Naive thymus-derived CD4-positive, alpha-beta T cell (primary cell): ENCODE measurements at regions of chr3 and their contacts with region 1.

Region 1: GRCh38 chr3:51498876-51499738 is 708 bp downstream of the DCAF1 start:
- DNase-seq: peak; percentile 52 to 90 (median 73)
- ATAC-seq: peak; percentile 58
- H3K4me3 ChIP-seq: peak overlapping the region; percentile 84
- H3K4me3 Mint-ChIP-seq: peak overlapping the region; percentile 87 to 100 (median 98)
- H3K27ac ChIP-seq: peak overlapping the region; percentile 90
- H3K27ac Mint-ChIP-seq: peak overlapping the region; percentile 90 to 99 (median 94)
- H3K4me1 ChIP-seq: peaks cover 10 to 14% of the 10 kb centered on the region in 2 donors
- H3K4me1 Mint-ChIP-seq: peaks cover 4 to 38% (median 35%) of the 10 kb centered on the region in 7 donors
- H3K27me3 ChIP-seq: no peaks in the 10 kb centered on the region
- H3K27me3 Mint-ChIP-seq: peaks cover 0 to 2% (median 0%) of the 10 kb centered on the region in 5 donors

Region 2: GRCh38 chr3:50850639-50851511 is 648.2 kb before region 1 on chr3:
- CTCF ChIA-PET with region 1: no interaction called
- POLR2A ChIA-PET with region 1: no interaction called
- intact Hi-C with region 1: no loop called
- DNase-seq: no peak
- ATAC-seq: no peak
- H3K4me3 ChIP-seq: no peak overlapping the region
- H3K4me3 Mint-ChIP-seq: no peak overlapping the region
- H3K27ac ChIP-seq: no peak overlapping the region
- H3K27ac Mint-ChIP-seq: no peak overlapping the region
- H3K4me1 ChIP-seq: no peaks in the 10 kb centered on the region
- H3K4me1 Mint-ChIP-seq: no peaks in the 10 kb centered on the region
- H3K27me3 ChIP-seq: peaks cover 0 to 3% of the 10 kb centered on the region in 2 donors
- H3K27me3 Mint-ChIP-seq: peaks cover 0 to 26% (median 3%) of the 10 kb centered on the region in 5 donors

Region 3: DNA sequence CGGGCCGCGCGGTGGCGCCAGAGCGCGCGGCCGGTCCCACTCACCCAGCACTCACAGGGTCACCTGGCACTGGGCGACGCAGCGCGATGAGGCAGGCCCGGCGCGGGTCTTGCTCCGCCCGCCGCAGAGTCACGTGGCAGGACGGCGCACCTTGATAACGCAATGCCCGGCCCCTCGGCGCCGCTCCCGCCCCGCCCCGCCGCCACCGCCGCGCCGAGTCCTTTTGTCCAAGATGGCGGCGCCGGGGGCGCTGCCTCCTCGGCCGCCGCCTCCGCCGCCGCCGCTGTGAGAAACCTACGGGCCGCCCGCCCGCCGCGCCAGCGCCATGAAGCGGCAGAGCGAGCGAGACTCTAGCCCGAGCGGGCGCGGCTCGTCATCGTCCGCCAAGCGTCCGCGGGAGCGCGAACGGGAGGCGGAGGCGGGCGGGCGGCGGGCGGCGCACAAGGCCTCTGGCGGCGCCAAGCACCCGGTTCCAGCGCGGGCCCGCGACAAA is 108.0 kb before region 1 on chr3 and contains the start of gene RBM15B:
- CTCF ChIA-PET with region 1: interaction called, 4 read pairs
- POLR2A ChIA-PET with region 1: interaction called, 17 read pairs
- intact Hi-C with region 1: loop called (anchors 1 kb)
- DNase-seq: peak; percentile 94 to 98 (median 96)
- ATAC-seq: peak; percentile 95
- H3K4me3 ChIP-seq: peak within 1 kb of the TSS; percentile 52
- H3K4me3 Mint-ChIP-seq: peak within 1 kb of the TSS; percentile 76 to 89 (median 83)
- H3K27ac ChIP-seq: peak within 1 kb of the TSS; percentile 90
- H3K27ac Mint-ChIP-seq: peak within 1 kb of the TSS; percentile 79 to 91 (median 88)
- H3K4me1 ChIP-seq: peaks cover 46 to 53% of the 10 kb centered on the region in 2 donors
- H3K4me1 Mint-ChIP-seq: peaks cover 35 to 75% (median 67%) of the 10 kb centered on the region in 7 donors
- H3K27me3 ChIP-seq: no peaks in the 10 kb centered on the region
- H3K27me3 Mint-ChIP-seq: no peaks in the 10 kb centered on the region
- total RNA-seq, gene RBM15B: 29.9 to 40.6 (median 31.3) TPM

Region 4: GRCh38 chr3:51637941-51638471 is 138.9 kb after region 1 on chr3:
- CTCF ChIA-PET with region 1: interaction called, 3 read pairs
- POLR2A ChIA-PET with region 1: no interaction called
- intact Hi-C with region 1: loop called (anchors 1 kb)
- DNase-seq: peak in 6 of 9 donors; percentile 3 to 23 (median 15)
- ATAC-seq: peak; percentile 80
- H3K4me3 ChIP-seq: no peak overlapping the region
- H3K4me3 Mint-ChIP-seq: no peak overlapping the region
- H3K27ac ChIP-seq: no peak overlapping the region
- H3K27ac Mint-ChIP-seq: peak overlapping the region in 1 of 9 donors; percentile 36
- H3K4me1 ChIP-seq: no peaks in the 10 kb centered on the region
- H3K4me1 Mint-ChIP-seq: peaks cover 0 to 3% (median 0%) of the 10 kb centered on the region in 7 donors
- H3K27me3 ChIP-seq: no peaks in the 10 kb centered on the region
- H3K27me3 Mint-ChIP-seq: no peaks in the 10 kb centered on the region

Region 5: GRCh38 chr3:51682079-51682478 is 183.0 kb after region 1 on chr3:
- CTCF ChIA-PET with region 1: interaction called, 83 read pairs
- POLR2A ChIA-PET with region 1: interaction called, 49 read pairs
- intact Hi-C with region 1: loop called (anchors 1 kb)
- DNase-seq: peak; percentile 35 to 83 (median 76)
- ATAC-seq: peak; percentile 86
- H3K4me3 ChIP-seq: peak overlapping the region; percentile 46
- H3K4me3 Mint-ChIP-seq: peak overlapping the region; percentile 53 to 91 (median 73)
- H3K27ac ChIP-seq: peak overlapping the region; percentile 63
- H3K27ac Mint-ChIP-seq: peak overlapping the region; percentile 42 to 95 (median 84)
- H3K4me1 ChIP-seq: peaks cover 85 to 89% of the 10 kb centered on the region in 2 donors
- H3K4me1 Mint-ChIP-seq: peaks cover 80 to 100% (median 97%) of the 10 kb centered on the region in 7 donors
- H3K27me3 ChIP-seq: no peaks in the 10 kb centered on the region
- H3K27me3 Mint-ChIP-seq: no peaks in the 10 kb centered on the region

Region 6: GRCh38 chr3:51974963-51975851 is 476.1 kb after region 1 on chr3 and contains the start of gene ABHD14A:
- CTCF ChIA-PET with region 1: no interaction called
- POLR2A ChIA-PET with region 1: no interaction called
- intact Hi-C with region 1: loop called in 1 of 2 experiments (anchors 1 kb)
- DNase-seq: peak; percentile 68 to 85 (median 73)
- ATAC-seq: peak; percentile 80
- H3K4me3 ChIP-seq: peak within 1 kb of the TSS; percentile 82
- H3K4me3 Mint-ChIP-seq: peak within 1 kb of the TSS; percentile 83 to 100 (median 94)
- H3K27ac ChIP-seq: peak within 1 kb of the TSS; percentile 77
- H3K27ac Mint-ChIP-seq: peak within 1 kb of the TSS; percentile 88 to 97 (median 92)
- H3K4me1 ChIP-seq: peaks cover 9 to 21% of the 10 kb centered on the region in 2 donors
- H3K4me1 Mint-ChIP-seq: peaks cover 26 to 53% (median 32%) of the 10 kb centered on the region in 7 donors
- H3K27me3 ChIP-seq: no peaks in the 10 kb centered on the region
- H3K27me3 Mint-ChIP-seq: no peaks in the 10 kb centered on the region
- total RNA-seq, gene ABHD14A: 9.9 to 23.7 (median 14.7) TPM

Region 7: GRCh38 chr3:52001443-52001974 is 502.4 kb after region 1 on chr3:
- CTCF ChIA-PET with region 1: no interaction called
- POLR2A ChIA-PET with region 1: no interaction called
- intact Hi-C with region 1: no loop called
- DNase-seq: peak; percentile 73 to 86 (median 81)
- ATAC-seq: peak; percentile 98
- H3K4me3 ChIP-seq: no peak overlapping the region
- H3K4me3 Mint-ChIP-seq: peak overlapping the region in 2 of 10 donors; percentile 12 to 16
- H3K27ac ChIP-seq: no peak overlapping the region
- H3K27ac Mint-ChIP-seq: peak overlapping the region in 3 of 9 donors; percentile 8 to 41 (median 11)
- H3K4me1 ChIP-seq: peaks cover 6 to 22% of the 10 kb centered on the region in 2 donors
- H3K4me1 Mint-ChIP-seq: peaks cover 6 to 24% (median 16%) of the 10 kb centered on the region in 7 donors
- H3K27me3 ChIP-seq: no peaks in the 10 kb centered on the region
- H3K27me3 Mint-ChIP-seq: peaks cover 0 to 16% (median 0%) of the 10 kb centered on the region in 5 donors

Region 8: GRCh38 chr3:52536369-52537164 is 1037.5 kb after region 1 on chr3 and contains the start of gene UQCC5:
- CTCF ChIA-PET with region 1: no interaction called
- POLR2A ChIA-PET with region 1: no interaction called
- intact Hi-C with region 1: loop called in 1 of 2 experiments (anchors 2 kb)
- DNase-seq: peak; percentile 89 to 98 (median 97)
- ATAC-seq: peak; percentile 95
- H3K4me3 ChIP-seq: peak within 1 kb of the TSS; percentile 67
- H3K4me3 Mint-ChIP-seq: peak within 1 kb of the TSS; percentile 96 to 100 (median 99)
- H3K27ac ChIP-seq: peak within 1 kb of the TSS; percentile 85
- H3K27ac Mint-ChIP-seq: peak within 1 kb of the TSS; percentile 96 to 99 (median 98)
- H3K4me1 ChIP-seq: peaks cover 24 to 30% of the 10 kb centered on the region in 2 donors
- H3K4me1 Mint-ChIP-seq: peaks cover 29 to 66% (median 50%) of the 10 kb centered on the region in 7 donors
- H3K27me3 ChIP-seq: no peaks in the 10 kb centered on the region
- H3K27me3 Mint-ChIP-seq: no peaks in the 10 kb centered on the region
- total RNA-seq, gene UQCC5: 5.4 to 11.9 (median 10.7) TPM